GM23248 (cell line): ENCODE measurements at regions of chr2 and their contacts with region 1.

Region 1: GRCh38 chr2:186503848-186504606 is 18.0 kb downstream of the ZC3H15 start:
- DNase-seq: peak; percentile 57
- H3K4me3 ChIP-seq: no peak overlapping the region
- H3K27ac ChIP-seq: no peak overlapping the region
- H3K4me1 ChIP-seq: peaks cover 6% of the 10 kb centered on the region; the same call in 1 of the 2 replicates
- H3K27me3 ChIP-seq: no peaks in the 10 kb centered on the region

Region 2: DNA sequence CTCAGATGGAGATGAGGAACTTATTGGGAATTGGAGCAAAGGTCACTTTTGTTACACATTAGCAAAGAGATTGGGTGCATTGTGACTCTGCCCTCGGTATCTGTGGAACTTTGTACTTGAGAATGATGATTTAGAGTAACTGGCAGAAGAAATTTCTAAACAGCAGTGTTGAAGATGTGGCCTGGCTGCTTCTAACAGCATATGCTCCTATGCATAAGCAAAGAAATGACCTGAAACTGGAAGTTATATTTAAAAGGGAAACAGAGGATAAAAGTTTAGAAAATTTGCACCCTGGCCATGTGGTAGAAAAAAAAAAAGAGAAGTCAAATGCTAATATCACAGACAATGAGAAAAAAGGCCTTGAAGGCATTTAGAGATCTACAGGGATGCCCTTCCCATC is 274.8 kb before region 1 on chr2:
- in situ Hi-C with region 1: no loop called
- DNase-seq: no peak
- H3K4me3 ChIP-seq: no peak overlapping the region
- H3K27ac ChIP-seq: no peak overlapping the region
- H3K4me1 ChIP-seq: no peaks in the 10 kb centered on the region
- H3K27me3 ChIP-seq: no peaks in the 10 kb centered on the region

Region 3: DNA sequence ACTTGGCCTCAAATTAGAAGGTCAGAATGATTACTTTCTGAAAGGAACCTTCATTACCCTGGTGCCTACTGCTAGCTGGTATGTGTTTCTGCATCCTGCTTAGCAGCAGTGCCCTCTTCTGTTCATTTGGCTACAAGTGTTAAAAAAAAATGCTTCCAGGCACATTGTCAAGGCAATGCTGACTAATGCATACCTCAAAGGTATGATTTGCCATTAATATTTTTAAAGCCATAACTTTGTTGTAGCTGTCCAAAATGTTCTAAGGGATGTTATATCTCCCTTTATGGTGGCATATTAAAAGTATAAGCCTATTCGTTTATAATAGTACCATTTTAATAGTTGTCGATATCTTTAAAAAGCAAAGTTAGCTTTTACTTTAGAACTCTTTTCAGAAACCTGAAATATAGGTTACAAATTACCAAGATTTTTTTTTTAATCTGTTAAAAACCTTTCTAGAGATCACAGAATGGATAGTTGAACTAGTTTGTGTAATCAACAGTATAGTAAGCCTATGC is 137.8 kb after region 1 on chr2:
- in situ Hi-C with region 1: loop called (anchors 10 kb)
- DNase-seq: peak; percentile 87
- H3K4me3 ChIP-seq: no peak overlapping the region
- H3K27ac ChIP-seq: no peak overlapping the region
- H3K4me1 ChIP-seq: peaks cover 4% of the 10 kb centered on the region; the same call in 1 of the 2 replicates
- H3K27me3 ChIP-seq: no peaks in the 10 kb centered on the region

Region 4: GRCh38 chr2:186848873-186849578 is 345.0 kb after region 1 on chr2 and contains the start of gene ZSWIM2:
- in situ Hi-C with region 1: loop called (anchors 25 kb)
- DNase-seq: peak; percentile 92
- H3K4me3 ChIP-seq: peak within 1 kb of the TSS; percentile 69
- H3K27ac ChIP-seq: peak within 1 kb of the TSS; percentile 81
- H3K4me1 ChIP-seq: peaks cover 6% of the 10 kb centered on the region; the same call in 1 of the 2 replicates
- H3K27me3 ChIP-seq: no peaks in the 10 kb centered on the region
- total RNA-seq, gene ZSWIM2: not detected in 2 replicates